ENCODE measurements at regions of chr13 and their contacts with region 1.

Region 1: DNA sequence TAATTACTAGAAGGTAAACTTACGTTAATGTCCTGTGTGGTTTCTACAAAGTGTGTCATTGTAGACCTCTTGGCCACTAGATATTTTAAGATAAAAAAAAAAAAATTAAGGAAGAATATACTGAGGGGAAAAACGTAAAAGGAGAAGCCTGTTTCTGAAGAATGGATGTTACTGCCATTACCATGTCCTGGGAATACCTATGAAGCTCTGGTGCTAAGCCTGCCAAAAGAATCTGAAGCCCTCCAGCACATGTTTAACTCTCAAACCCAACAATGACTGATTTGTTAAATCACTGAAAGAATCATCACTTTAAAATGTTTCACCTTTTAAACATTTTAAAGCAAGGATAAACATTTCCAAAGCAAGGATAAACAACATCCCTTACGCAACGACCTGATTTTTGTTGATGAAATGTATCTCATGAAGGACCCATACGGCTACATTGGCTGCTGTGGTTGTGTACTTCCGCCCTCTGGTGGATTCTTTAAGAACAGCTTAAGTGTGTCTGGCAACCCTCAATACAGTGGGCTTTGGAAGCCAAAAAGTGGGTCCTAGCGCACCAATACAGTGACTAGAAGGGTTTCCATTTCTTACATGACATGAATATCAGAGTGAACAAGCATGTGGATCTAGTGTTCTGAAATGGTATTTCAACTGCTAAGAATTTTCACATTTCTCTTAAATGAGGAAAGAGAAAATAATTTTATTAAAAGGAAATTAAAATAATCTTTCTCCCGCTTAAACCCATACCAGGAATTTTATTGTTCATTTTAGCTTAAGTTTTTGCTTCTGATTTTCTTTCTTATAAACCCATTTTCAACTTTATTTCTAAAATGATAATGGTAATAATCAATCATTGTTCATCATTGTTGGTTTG is 74.5 kb upstream of the RAP2A start:
- DNase-seq: no peak
- H3K4me3 ChIP-seq: no peak overlapping the region
- H3K27ac ChIP-seq: no peak overlapping the region
- H3K4me1 ChIP-seq: no peaks in the 10 kb centered on the region
- H3K27me3 ChIP-seq: no peaks in the 10 kb centered on the region
- CTCF ChIP-seq: peak; percentile 18 to 86 (median 75)
- EP300 ChIP-seq: no peak
- POLR2A ChIP-seq: no peak
- RAD21 ChIP-seq: peak; percentile 93 to 94

Region 2: GRCh38 chr13:97344265-97345175 is 14.9 kb before region 1 on chr13:
- CTCF ChIA-PET with region 1: interaction called, 11 read pairs
- POLR2A ChIA-PET with region 1: no interaction called
- DNase-seq: no peak
- H3K4me3 ChIP-seq: no peak overlapping the region
- H3K27ac ChIP-seq: no peak overlapping the region
- H3K4me1 ChIP-seq: peaks cover 0 to 2% (median 0%) of the 10 kb centered on the region in 4 experiments; a peak in 1 of 7 replicates
- H3K27me3 ChIP-seq: no peaks in the 10 kb centered on the region
- CTCF ChIP-seq: peak in 2 of 3 experiments; percentile 57 to 64; a peak in 3 of 4 replicates
- EP300 ChIP-seq: no peak
- POLR2A ChIP-seq: no peak
- RAD21 ChIP-seq: peak; percentile 81 to 84

Measured in H1 (cell line).